SK-N-SH (cell line): ENCODE measurements at regions of chr13 and their contacts with region 1.

Region 1: GRCh38 chr13:109667056-109667455 is 119.3 kb downstream of the IRS2 start:
- DNase-seq: peak; percentile 53
- H3K4me3 ChIP-seq: peak overlapping the region in 1 of 2 experiments; percentile 35; a peak in 2 of 4 replicates
- H3K27ac ChIP-seq: peak overlapping the region; percentile 49 to 100
- H3K4me1 ChIP-seq: peaks cover 7 to 50% of the 10 kb centered on the region in 2 experiments; a peak in 3 of 4 replicates
- H3K27me3 ChIP-seq: no peaks in the 10 kb centered on the region
- CTCF ChIP-seq: no peak
- EP300 ChIP-seq: no peak
- RAD21 ChIP-seq: no peak

Region 2: GRCh38 chr13:109344552-109345157 is 322.4 kb before region 1 on chr13:
- CTCF ChIA-PET with region 1: interaction called, 3 read pairs
- POLR2A ChIA-PET with region 1: interaction called, 10 read pairs
- DNase-seq: peak; percentile 37
- H3K4me3 ChIP-seq: no peak overlapping the region
- H3K27ac ChIP-seq: peak overlapping the region; percentile 67 to 100
- H3K4me1 ChIP-seq: peaks cover 22 to 28% of the 10 kb centered on the region in 2 experiments
- H3K27me3 ChIP-seq: no peaks in the 10 kb centered on the region
- CTCF ChIP-seq: no peak
- EP300 ChIP-seq: no peak; a peak in 1 of 4 replicates
- RAD21 ChIP-seq: no peak

Region 3: DNA sequence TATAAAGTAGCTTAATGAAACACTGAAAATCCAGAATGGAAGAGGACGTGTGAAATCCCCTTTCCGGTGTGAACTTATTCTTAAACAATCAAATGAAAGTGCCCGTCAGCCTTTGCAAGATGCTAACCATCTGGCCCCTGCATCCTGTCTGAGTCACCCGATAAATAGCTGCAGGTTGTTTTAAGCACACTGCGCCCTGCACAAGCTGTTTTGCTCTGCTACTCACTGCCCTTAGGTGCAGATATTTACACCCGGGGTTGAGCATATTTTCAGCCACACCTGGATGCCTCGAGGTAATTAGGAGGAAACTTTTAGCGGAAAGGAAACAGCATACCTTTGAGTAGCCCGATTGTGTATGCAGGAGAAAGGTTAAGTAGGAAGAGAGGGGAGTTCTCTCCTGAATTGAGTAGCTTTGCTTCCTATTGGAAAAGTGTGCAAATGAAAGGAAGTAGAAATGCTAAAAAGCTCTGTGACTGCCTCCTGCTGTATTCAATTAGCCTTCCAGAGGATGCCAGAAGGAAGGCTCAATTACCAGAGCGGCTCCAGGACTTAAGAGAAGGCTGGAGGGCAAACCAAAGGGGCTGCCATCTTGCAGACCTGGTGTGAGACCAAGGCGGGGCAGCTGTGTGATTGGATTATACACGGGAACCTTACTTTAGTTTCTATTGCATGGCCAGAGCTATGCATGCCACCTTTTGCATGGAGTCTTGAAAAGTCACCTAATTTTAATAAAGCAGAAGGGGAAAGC is 76.8 kb after region 1 on chr13:
- CTCF ChIA-PET with region 1: interaction called, 10 read pairs
- POLR2A ChIA-PET with region 1: interaction called, 12 read pairs
- DNase-seq: peak; percentile 79
- H3K4me3 ChIP-seq: peak overlapping the region in 1 of 2 experiments; percentile 24; a peak in 2 of 4 replicates
- H3K27ac ChIP-seq: peak overlapping the region in 1 of 2 experiments; percentile 98; a peak in 2 of 4 replicates
- H3K4me1 ChIP-seq: peaks cover 12 to 35% of the 10 kb centered on the region in 2 experiments
- H3K27me3 ChIP-seq: no peaks in the 10 kb centered on the region
- CTCF ChIP-seq: no peak
- EP300 ChIP-seq: peak; percentile 66 to 87
- RAD21 ChIP-seq: peak; percentile 32

Region 4: DNA sequence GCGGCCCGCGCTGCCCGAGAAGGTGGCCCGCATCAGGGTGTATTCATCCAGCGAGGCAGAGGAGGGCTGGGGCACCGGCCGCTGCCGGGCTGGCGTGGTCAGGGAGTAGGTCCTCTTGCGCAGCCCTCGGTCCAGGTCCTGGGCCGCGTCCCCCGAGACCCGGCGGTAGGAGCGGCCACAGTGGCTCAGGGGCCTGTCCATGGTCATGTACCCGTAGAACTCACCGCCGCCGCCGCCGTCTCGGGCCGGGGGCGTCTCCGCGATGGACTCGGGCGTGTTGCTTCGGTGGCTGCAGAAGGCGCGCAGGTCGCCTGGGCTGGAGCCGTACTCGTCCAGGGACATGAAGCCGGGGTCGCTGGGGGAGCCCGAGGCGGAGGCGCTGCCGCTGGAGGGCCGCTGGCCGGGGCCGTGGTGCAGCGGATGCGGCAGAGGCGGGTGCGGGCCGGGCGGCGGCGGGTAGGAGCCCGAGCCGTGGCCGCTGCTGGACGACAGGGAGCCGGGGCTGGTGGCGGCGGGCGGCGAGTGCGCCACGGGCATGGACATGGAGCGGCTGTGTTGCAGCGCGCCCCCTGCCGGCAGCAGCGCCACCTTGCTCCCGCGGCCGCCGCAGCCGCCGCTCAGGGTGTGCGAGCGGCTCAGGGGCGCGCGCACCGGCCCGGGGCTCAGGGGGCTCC is 117.3 kb after region 1 on chr13:
- CTCF ChIA-PET with region 1: interaction called, 4 read pairs
- POLR2A ChIA-PET with region 1: interaction called, 21 read pairs
- DNase-seq: peak; percentile 88
- H3K4me3 ChIP-seq: peak overlapping the region; percentile 73 to 84
- H3K27ac ChIP-seq: peak overlapping the region; percentile 64 to 96; a peak in 3 of 4 replicates
- H3K4me1 ChIP-seq: peaks cover 0 to 10% of the 10 kb centered on the region in 2 experiments; a peak in 2 of 4 replicates
- H3K27me3 ChIP-seq: no peaks in the 10 kb centered on the region
- CTCF ChIP-seq: peak; percentile 28; the same call in 1 of the 2 replicates
- EP300 ChIP-seq: 0 out of 4 replicates have a peak, but pooled peaks of 1 of the 2 experiments have one; percentile 6
- RAD21 ChIP-seq: peak; percentile 59